Breast epithelium (tissue), 4 donors: ENCODE measurements at regions of chr5 and their contacts with region 1.

Region 1: GRCh38 chr5:19771174-19771835 is 216.7 kb downstream of the CDH18 start:
- DNase-seq: no peak
- H3K4me3 ChIP-seq: no peak overlapping the region
- H3K27ac ChIP-seq: no peak overlapping the region
- H3K4me1 ChIP-seq: no peaks in the 10 kb centered on the region
- H3K27me3 ChIP-seq: no peaks in the 10 kb centered on the region
- CTCF ChIP-seq: no peak
- POLR2A ChIP-seq: no peak

Region 2: GRCh38 chr5:18745646-18746615 is 1025.4 kb before region 1 on chr5:
- intact Hi-C with region 1: no loop called
- DNase-seq: no peak
- H3K4me3 ChIP-seq: peak overlapping the region; percentile 42 to 68 (median 49)
- H3K27ac ChIP-seq: peak overlapping the region; percentile 34 to 59
- H3K4me1 ChIP-seq: no peaks in the 10 kb centered on the region
- H3K27me3 ChIP-seq: no peaks in the 10 kb centered on the region
- CTCF ChIP-seq: no peak
- POLR2A ChIP-seq: no peak

Region 3: DNA sequence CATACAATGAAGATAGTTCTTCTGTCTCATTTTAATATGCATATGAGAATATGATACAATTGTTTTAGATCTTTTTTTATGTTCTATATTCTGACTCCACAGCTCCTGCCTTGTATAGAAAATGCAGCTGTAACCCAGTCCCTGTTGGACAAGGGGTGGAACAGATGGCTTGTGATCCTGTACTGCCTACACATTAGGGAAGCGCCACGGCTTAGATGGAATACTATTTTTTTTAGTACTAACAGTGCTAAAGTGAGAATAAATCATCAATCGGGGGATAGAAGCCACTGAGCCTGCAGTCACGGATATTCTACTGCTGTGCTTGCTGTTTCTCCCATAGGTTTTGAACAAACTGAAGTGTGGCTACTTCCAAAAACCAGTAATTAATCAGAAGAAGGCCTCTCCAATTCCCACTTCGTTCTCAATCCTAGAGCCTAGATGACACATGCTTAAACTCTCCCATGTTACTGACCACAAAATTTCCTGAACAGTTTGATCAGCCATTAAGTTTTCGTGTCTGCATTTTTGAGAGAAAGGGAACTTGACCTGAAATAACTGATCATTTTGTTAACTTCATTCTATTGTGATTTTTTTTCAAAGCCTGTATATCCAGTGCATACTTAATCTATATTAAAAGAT is 66.3 kb after region 1 on chr5:
- intact Hi-C with region 1: loop called (anchors 2 kb)
- DNase-seq: no peak
- H3K4me3 ChIP-seq: no peak overlapping the region
- H3K27ac ChIP-seq: no peak overlapping the region
- H3K4me1 ChIP-seq: no peaks in the 10 kb centered on the region
- H3K27me3 ChIP-seq: no peaks in the 10 kb centered on the region
- CTCF ChIP-seq: no peak
- POLR2A ChIP-seq: no peak

Region 4: DNA sequence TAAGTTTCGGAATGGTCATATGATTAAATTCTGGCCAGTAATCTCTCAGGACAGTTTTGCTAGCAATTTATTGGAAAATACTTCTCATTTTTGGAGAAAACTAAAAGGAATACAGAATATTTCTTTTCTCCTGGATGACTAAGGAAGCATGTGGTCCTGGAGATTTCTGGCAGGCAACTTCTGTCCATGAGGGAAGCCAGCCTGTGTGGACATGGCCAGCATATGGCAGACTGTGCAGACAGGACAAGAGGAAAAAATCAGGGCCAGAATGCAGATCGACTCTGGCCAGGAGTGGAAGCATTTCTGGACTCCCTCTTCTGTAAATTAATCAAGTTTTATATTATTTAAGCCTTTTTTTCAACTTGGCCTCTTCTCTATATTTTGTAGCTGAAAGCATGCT is 317.1 kb after region 1 on chr5:
- intact Hi-C with region 1: no loop called
- DNase-seq: no peak
- H3K4me3 ChIP-seq: no peak overlapping the region
- H3K27ac ChIP-seq: no peak overlapping the region
- H3K4me1 ChIP-seq: no peaks in the 10 kb centered on the region
- H3K27me3 ChIP-seq: no peaks in the 10 kb centered on the region
- CTCF ChIP-seq: no peak
- POLR2A ChIP-seq: no peak